ENCODE measurements at regions of chr19 and their contacts with region 1.

Region 1: GRCh38 chr19:2186071-2186846 is 22.5 kb downstream of the DOT1L start:
- DNase-seq: peak; percentile 95
- ATAC-seq: peak; percentile 96
- H3K4me3 ChIP-seq: no peak overlapping the region
- H3K27ac ChIP-seq: peak overlapping the region; percentile 69
- H3K4me1 ChIP-seq: peaks cover 24% of the 10 kb centered on the region
- H3K27me3 ChIP-seq: no peaks in the 10 kb centered on the region
- CTCF ChIP-seq: no peak
- POLR2A ChIP-seq: peak; percentile 74
- RAD21 ChIP-seq: no peak; the same call in 1 of the 2 replicates

Region 2: DNA sequence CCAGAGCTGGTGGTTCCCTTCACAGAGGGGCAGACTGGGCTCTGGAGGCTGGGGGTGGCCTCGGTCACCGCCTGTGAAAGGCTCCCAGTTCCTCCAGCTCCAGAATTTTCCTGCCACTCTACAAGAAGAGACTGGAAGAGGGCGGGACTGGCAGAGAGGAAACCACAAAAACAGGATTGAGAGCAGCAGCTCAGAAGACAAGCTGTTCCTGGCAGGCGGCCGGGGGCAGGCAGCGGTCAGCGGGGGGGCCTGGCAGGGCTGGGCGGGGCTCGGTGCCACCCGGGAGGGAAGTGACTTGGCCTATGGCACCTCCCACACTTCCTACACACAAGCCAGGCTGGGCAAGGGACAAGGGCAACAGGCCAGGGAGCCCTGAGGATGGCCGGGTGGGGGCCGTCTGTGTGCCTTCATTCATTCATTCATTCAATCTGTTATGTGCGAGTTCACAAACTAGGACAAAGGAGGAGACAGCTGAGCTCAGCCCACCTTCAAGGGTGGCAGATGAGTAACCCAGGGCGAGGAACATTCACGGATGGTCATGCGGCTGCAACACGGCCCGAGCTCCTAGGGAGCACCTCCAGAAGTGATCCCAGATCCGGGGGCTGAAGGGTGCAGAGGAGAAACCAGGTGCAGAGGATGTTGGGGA is 153.8 kb before region 1 on chr19:
- CTCF ChIA-PET with region 1: no interaction called
- POLR2A ChIA-PET with region 1: no interaction called
- dilution Hi-C with region 1: no loop called
- in situ Hi-C with region 1: no loop called
- intact Hi-C with region 1: no loop called
- DNase-seq: peak; percentile 65
- ATAC-seq: peak; percentile 87
- H3K4me3 ChIP-seq: no peak overlapping the region
- H3K27ac ChIP-seq: peak overlapping the region; percentile 68
- H3K4me1 ChIP-seq: peaks cover 11% of the 10 kb centered on the region
- H3K27me3 ChIP-seq: no peaks in the 10 kb centered on the region
- CTCF ChIP-seq: no peak
- POLR2A ChIP-seq: no peak
- RAD21 ChIP-seq: no peak

Region 3: GRCh38 chr19:2123682-2124387 is 62.4 kb before region 1 on chr19:
- CTCF ChIA-PET with region 1: no interaction called
- POLR2A ChIA-PET with region 1: no interaction called
- dilution Hi-C with region 1: no loop called
- in situ Hi-C with region 1: no loop called
- intact Hi-C with region 1: no loop called
- DNase-seq: no peak
- ATAC-seq: peak; percentile 56
- H3K4me3 ChIP-seq: no peak overlapping the region
- H3K27ac ChIP-seq: no peak overlapping the region
- H3K4me1 ChIP-seq: no peaks in the 10 kb centered on the region
- H3K27me3 ChIP-seq: no peaks in the 10 kb centered on the region
- CTCF ChIP-seq: no peak
- POLR2A ChIP-seq: no peak
- RAD21 ChIP-seq: no peak

Region 4: DNA sequence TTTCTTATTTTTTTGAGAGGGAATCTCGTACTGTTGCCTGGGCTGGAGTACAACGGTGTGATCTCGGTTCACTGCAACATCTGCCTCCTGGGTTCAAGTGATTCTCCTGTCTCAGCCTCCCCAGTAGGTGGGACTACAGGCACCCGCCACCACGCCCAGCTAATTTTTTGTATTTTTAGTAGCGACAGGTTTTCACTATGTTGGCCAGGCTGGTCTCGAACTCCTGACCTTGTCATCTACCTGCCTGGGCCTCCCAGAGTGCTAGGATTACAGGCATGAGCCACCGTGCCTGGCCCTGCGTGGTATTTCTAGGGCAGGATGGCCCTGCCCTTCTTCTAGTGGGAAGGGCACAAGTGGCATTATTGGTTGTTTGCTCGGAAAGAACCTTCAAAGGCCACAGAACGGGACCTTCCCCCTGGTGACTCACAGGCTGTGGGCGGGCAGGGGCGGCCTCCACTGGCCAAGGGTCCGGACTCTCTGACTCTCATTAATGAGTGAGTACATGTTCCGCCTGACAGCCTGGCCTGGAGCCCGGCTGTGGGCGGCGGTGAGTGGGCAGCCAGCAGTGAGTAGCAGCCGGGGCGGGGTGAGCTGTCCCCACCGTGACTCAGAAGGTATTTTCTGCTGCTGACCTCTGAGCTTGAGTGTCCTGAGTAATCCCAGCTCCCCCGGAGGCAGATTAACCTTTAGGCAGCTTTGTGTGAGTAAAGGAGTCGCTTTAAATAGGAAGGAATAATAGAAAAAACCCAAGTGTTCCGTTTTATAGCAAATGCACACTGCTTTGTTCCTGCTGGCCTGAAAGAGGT is 17.4 kb before region 1 on chr19:
- CTCF ChIA-PET with region 1: no interaction called
- POLR2A ChIA-PET with region 1: no interaction called
- dilution Hi-C with region 1: no loop called
- in situ Hi-C with region 1: no loop called
- intact Hi-C with region 1: loop called (anchors 1 kb)
- DNase-seq: peak; percentile 99
- ATAC-seq: peak; percentile 78
- H3K4me3 ChIP-seq: no peak overlapping the region
- H3K27ac ChIP-seq: peak overlapping the region; percentile 67
- H3K4me1 ChIP-seq: peaks cover 37% of the 10 kb centered on the region
- H3K27me3 ChIP-seq: no peaks in the 10 kb centered on the region
- CTCF ChIP-seq: no peak
- POLR2A ChIP-seq: peak; percentile 65; the same call in 1 of the 2 replicates
- RAD21 ChIP-seq: peak; percentile 7; the same call in 1 of the 2 replicates

Measured in IMR-90 (cell line).